Vagina (tissue), 2 donors: ENCODE measurements at regions of chr18 and their contacts with region 1.

Region 1: DNA sequence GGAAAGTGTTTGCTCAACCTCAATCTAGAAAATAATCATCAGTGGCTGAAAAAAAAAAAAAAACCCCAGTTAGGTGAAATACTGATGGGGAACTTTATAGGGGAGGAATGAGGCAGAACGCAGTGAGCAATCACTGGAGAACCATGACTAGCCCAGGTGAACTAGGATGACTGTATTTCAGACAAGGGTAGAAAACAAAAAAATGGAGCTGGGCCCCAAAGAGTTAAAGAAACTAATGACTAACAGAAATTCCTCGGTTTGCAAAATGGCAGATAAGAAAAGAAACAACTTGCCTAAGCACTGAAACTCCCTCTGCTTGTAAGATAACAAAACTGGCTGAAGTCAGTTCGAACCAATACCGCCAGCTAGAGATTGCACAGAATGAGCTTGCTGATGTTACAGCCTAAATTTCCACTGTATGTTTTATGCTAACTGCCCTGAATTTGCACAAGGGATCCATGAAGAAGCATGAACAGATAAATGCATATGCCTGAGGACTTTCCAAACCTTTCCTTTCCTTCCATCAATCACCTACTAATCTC is 245.9 kb downstream of the METTL4 start:
- DNase-seq: no peak
- H3K4me3 ChIP-seq: no peak overlapping the region
- H3K27ac ChIP-seq: no peak overlapping the region
- H3K4me1 ChIP-seq: no peaks in the 10 kb centered on the region
- H3K27me3 ChIP-seq: no peaks in the 10 kb centered on the region
- CTCF ChIP-seq: no peak
- POLR2A ChIP-seq: no peak

Region 2: DNA sequence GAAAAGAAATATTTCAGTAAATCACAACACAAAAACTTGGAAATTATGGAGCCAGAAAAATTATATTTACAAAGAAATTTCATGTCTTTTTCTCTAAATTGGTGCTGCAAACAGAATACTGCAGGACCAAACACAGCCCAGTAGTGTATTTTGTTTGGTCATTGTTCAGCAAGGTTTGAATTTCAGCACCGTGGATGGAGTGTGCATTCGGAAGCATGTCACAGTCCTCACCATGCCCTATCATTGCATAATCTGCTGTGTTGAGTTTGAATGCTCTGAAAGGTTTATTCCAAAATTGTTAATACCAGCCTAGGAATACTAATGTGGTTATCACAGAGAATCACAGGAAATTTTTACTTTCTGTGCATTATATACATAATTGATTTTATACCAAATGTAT is 50.8 kb before region 1 on chr18:
- intact Hi-C with region 1: no loop called
- DNase-seq: no peak
- H3K4me3 ChIP-seq: no peak overlapping the region
- H3K27ac ChIP-seq: no peak overlapping the region
- H3K4me1 ChIP-seq: no peaks in the 10 kb centered on the region
- H3K27me3 ChIP-seq: no peaks in the 10 kb centered on the region
- CTCF ChIP-seq: no peak
- POLR2A ChIP-seq: no peak

Region 3: DNA sequence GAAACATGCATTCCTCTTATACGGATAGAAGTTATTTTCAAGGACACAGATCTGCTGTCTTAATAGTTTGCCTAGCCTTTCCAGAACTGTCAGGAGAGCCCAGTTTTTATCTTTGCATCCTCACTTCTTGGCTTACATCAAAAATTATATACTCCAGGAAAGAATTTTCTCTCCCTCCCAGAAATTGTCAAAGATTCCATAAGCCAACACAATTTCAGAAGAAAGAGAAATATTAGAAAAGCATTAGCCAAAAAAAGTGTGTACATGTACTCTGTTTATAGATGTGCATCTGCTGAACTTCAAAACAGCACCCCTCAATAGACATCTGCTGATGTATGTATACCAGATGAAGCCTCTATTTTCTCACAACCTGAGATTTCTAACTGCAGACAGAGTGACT is 35.5 kb after region 1 on chr18:
- intact Hi-C with region 1: loop called (anchors 2 kb)
- DNase-seq: no peak
- H3K4me3 ChIP-seq: no peak overlapping the region
- H3K27ac ChIP-seq: no peak overlapping the region
- H3K4me1 ChIP-seq: no peaks in the 10 kb centered on the region
- H3K27me3 ChIP-seq: no peaks in the 10 kb centered on the region
- CTCF ChIP-seq: no peak
- POLR2A ChIP-seq: no peak

Region 4: DNA sequence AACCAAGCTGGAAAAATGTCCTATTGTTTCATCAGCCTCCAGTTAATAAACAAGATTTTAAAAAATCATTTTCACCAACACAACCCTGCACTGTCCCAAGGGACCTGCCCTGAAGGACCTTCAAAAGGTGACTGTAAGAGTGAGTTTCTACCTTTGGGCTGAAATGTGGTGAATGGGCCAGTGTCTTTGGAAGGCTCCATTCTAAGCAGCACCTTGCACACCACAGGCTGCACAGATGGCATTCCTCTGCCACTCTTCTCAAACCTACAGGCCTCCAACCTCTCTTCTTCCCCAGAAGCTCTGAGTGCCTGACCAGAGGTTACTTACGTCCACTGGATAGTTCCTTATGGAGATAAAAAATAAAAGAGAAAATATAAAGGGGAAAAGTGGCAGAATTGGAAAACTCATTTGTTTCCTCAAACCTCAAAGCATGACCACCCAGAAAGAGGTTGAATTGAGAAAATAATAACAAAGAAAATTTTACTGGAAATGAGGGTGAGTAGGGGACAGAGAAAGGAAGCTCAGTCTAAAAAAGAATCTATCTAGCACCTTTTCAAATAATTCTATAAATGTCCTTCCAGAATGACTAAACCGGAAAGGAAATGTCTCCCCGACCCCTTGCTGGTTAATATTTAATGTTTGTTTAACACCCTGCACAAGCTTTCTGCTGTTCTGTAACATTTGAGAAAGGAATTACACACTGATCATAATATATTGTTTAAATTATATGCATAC is 70.2 kb after region 1 on chr18:
- intact Hi-C with region 1: no loop called
- DNase-seq: no peak
- H3K4me3 ChIP-seq: no peak overlapping the region
- H3K27ac ChIP-seq: no peak overlapping the region
- H3K4me1 ChIP-seq: no peaks in the 10 kb centered on the region
- H3K27me3 ChIP-seq: no peaks in the 10 kb centered on the region
- CTCF ChIP-seq: no peak
- POLR2A ChIP-seq: no peak